B cell (primary cell): ENCODE measurements at regions of chr12 and their contacts with region 1.

Region 1: GRCh38 chr12:52032804-52033502 is 18.3 kb upstream of the NR4A1 start:
- DNase-seq: peak; percentile 95
- ATAC-seq: peak; percentile 79
- H3K4me3 ChIP-seq: peak overlapping the region; percentile 34 to 62 (median 57)
- H3K4me3 Mint-ChIP-seq: peak overlapping the region; percentile 88
- H3K27ac ChIP-seq: peak overlapping the region; percentile 93 to 96
- H3K27ac Mint-ChIP-seq: peak overlapping the region; percentile 94
- H3K4me1 ChIP-seq: peaks cover 35 to 49% of the 10 kb centered on the region in 2 donors
- H3K4me1 Mint-ChIP-seq: peaks cover 48% of the 10 kb centered on the region
- H3K27me3 ChIP-seq: peaks cover 0 to 2% (median 0%) of the 10 kb centered on the region in 4 experiments
- H3K27me3 Mint-ChIP-seq: no peaks in the 10 kb centered on the region
- CTCF ChIP-seq: no peak

Region 2: GRCh38 chr12:51994959-51995358 is 38.0 kb before region 1 on chr12:
- CTCF ChIA-PET with region 1: interaction called, 707 read pairs
- POLR2A ChIA-PET with region 1: interaction called, 7 read pairs
- intact Hi-C with region 1: no loop called
- DNase-seq: no peak
- ATAC-seq: no peak
- H3K4me3 ChIP-seq: no peak overlapping the region
- H3K4me3 Mint-ChIP-seq: no peak overlapping the region
- H3K27ac ChIP-seq: no peak overlapping the region
- H3K27ac Mint-ChIP-seq: no peak overlapping the region
- H3K4me1 ChIP-seq: no peaks in the 10 kb centered on the region
- H3K4me1 Mint-ChIP-seq: peaks cover 2% of the 10 kb centered on the region
- H3K27me3 ChIP-seq: no peaks in the 10 kb centered on the region
- H3K27me3 Mint-ChIP-seq: no peaks in the 10 kb centered on the region
- CTCF ChIP-seq: no peak

Region 3: DNA sequence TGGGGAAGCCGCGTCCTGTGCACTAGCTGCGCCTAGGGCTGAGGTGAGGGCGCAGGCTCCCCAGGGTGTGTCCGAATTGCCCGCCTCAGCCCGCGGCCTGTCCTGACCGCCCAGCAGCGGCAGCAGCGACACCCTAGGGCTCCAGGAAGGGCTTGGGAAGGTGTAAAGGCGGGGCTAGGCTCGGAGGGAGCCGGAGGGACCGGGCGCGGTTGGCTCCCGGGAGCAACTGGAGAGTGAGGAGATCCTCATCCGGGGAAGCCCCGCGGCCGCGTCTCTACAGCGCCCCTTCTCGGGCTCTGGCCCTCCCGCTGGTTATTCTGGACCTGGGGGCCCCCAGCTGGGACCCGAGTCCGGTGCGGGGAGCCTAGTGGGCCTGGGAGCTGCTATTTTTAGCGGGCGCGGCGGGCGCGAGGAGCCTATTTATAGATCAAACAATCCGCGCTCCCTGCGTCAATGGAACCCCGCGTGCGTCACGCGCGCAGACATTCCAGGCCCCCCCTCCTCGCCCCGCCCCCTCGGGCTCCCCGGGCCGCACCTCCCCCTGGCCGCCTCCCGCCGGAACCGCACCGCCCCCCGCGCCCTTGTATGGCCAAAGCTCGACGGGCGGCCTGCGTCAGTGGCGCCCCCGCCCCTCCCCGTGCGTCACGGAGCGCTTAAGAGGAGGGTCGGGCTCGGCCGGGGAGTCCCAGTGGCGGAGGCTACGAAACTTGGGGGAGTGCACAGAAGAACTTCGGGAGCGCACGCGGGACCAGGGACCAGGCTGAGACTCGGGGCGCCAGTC is 18.0 kb after region 1 on chr12 and contains the start of gene NR4A1:
- CTCF ChIA-PET with region 1: interaction called, 27 read pairs
- POLR2A ChIA-PET with region 1: interaction called, 31 read pairs
- intact Hi-C with region 1: loop called (anchors 1 kb)
- DNase-seq: peak; percentile 99
- ATAC-seq: peak; percentile 80
- H3K4me3 ChIP-seq: peak within 1 kb of the TSS; percentile 73 to 92 (median 86)
- H3K4me3 Mint-ChIP-seq: peak within 1 kb of the TSS; percentile 100
- H3K27ac ChIP-seq: peak within 1 kb of the TSS; percentile 99 to 100
- H3K27ac Mint-ChIP-seq: peak within 1 kb of the TSS; percentile 99
- H3K4me1 ChIP-seq: peaks cover 25 to 38% of the 10 kb centered on the region in 2 donors
- H3K4me1 Mint-ChIP-seq: peaks cover 45% of the 10 kb centered on the region
- H3K27me3 ChIP-seq: no peaks in the 10 kb centered on the region
- H3K27me3 Mint-ChIP-seq: no peaks in the 10 kb centered on the region
- CTCF ChIP-seq: no peak
- total RNA-seq, gene NR4A1: 43.2 and 52.8 TPM in 2 replicates

Region 4: GRCh38 chr12:52082988-52083637 is 50.2 kb after region 1 on chr12:
- CTCF ChIA-PET with region 1: interaction called, 1,315 read pairs
- POLR2A ChIA-PET with region 1: interaction called, 8 read pairs
- intact Hi-C with region 1: loop called (anchors 2 kb)
- DNase-seq: peak; percentile 80
- ATAC-seq: peak; percentile 53
- H3K4me3 ChIP-seq: no peak overlapping the region
- H3K4me3 Mint-ChIP-seq: peak overlapping the region; percentile 74
- H3K27ac ChIP-seq: no peak overlapping the region
- H3K27ac Mint-ChIP-seq: peak overlapping the region; percentile 75
- H3K4me1 ChIP-seq: peaks cover 35 to 41% of the 10 kb centered on the region in 2 donors
- H3K4me1 Mint-ChIP-seq: peaks cover 37% of the 10 kb centered on the region
- H3K27me3 ChIP-seq: peaks cover 0 to 8% (median 0%) of the 10 kb centered on the region in 4 experiments
- H3K27me3 Mint-ChIP-seq: peaks cover 5% of the 10 kb centered on the region
- CTCF ChIP-seq: peak; percentile 98